ENCODE measurements at regions of chr7 and their contacts with region 1.

Region 1: GRCh38 chr7:55365675-55366460 is 731 bp downstream of the LANCL2 start:
- DNase-seq: peak; percentile 98
- ATAC-seq: peak; percentile 85
- H3K4me3 Mint-ChIP-seq: peak overlapping the region; percentile 93
- H3K27ac Mint-ChIP-seq: peak overlapping the region; percentile 98
- H3K4me1 Mint-ChIP-seq: peaks cover 22% of the 10 kb centered on the region
- H3K27me3 Mint-ChIP-seq: no peaks in the 10 kb centered on the region

Region 2: GRCh38 chr7:54758702-54759592 is 606.9 kb before region 1 on chr7 and contains the start of gene SEC61G:
- POLR2A ChIA-PET with region 1: interaction called, 14 read pairs
- DNase-seq: peak; percentile 93
- ATAC-seq: peak; percentile 96
- H3K4me3 Mint-ChIP-seq: peak within 1 kb of the TSS; percentile 100
- H3K27ac Mint-ChIP-seq: peak within 1 kb of the TSS; percentile 93
- H3K4me1 Mint-ChIP-seq: peaks cover 14% of the 10 kb centered on the region
- H3K27me3 Mint-ChIP-seq: peaks cover 5% of the 10 kb centered on the region
- total RNA-seq, gene SEC61G: 93.4 to 96.0 TPM

Region 3: DNA sequence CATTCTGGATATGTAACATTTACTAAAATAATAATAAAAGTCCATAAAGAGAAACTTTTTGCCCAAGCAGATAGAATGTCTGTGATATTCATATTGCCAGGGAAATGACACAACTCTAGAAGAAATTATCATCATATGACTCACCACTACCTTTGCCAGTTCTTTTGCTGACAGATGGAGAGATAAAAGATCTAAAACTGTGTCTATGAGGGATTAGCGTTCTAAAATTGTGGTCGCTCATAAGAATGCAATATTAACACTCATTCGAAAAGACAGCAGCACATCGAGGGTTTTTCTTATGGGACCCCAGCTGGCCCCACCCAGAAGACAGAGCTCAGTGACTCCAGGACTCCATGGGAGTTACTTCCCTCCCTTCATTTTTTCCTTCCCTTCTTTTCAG is 17.4 kb before region 1 on chr7:
- POLR2A ChIA-PET with region 1: no interaction called
- DNase-seq: no peak
- ATAC-seq: no peak
- H3K4me3 Mint-ChIP-seq: no peak overlapping the region
- H3K27ac Mint-ChIP-seq: no peak overlapping the region
- H3K4me1 Mint-ChIP-seq: no peaks in the 10 kb centered on the region
- H3K27me3 Mint-ChIP-seq: peaks cover 16% of the 10 kb centered on the region

Region 4: GRCh38 chr7:55534175-55534915 is 168.5 kb after region 1 on chr7:
- POLR2A ChIA-PET with region 1: interaction called, 11 read pairs
- DNase-seq: peak; percentile 53
- ATAC-seq: peak; percentile 75
- H3K4me3 Mint-ChIP-seq: peak overlapping the region; percentile 80
- H3K27ac Mint-ChIP-seq: peak overlapping the region; percentile 93
- H3K4me1 Mint-ChIP-seq: peaks cover 66% of the 10 kb centered on the region
- H3K27me3 Mint-ChIP-seq: no peaks in the 10 kb centered on the region